Astrocyte of the cerebellum (primary cell): ENCODE measurements at regions of chr12 and their contacts with region 1.

Region 1: DNA sequence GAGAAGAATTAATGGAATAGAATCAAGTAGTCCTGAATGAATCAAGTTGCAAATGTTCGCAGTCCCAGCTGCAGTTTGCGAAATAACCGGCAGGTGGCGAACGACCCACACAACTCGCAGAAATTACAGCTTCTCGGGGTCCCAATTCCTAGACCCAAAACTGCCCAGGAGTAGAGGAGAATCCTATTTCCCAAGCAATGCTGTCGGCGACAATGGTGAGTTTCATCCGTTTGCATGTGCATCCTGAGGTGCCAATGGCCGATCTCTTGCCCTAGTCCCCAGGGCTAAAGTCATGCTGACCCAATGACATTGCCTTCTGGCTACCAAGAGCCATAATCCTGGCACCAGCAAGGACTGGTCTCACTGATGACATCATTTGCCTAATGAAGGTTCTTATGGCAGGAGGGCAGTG is 8.5 kb upstream of the ASCL1 start:
- DNase-seq: peak; percentile 23
- H3K4me3 ChIP-seq: no peak overlapping the region
- CTCF ChIP-seq: peak; percentile 92

Region 2: GRCh38 chr12:102990419-102990818 is 41.5 kb after region 1 on chr12:
- in situ Hi-C with region 1: loop called (anchors 5 kb)
- DNase-seq: no peak
- H3K4me3 ChIP-seq: no peak overlapping the region
- CTCF ChIP-seq: no peak

Region 3: GRCh38 chr12:103548622-103549601 is 600.0 kb after region 1 on chr12:
- in situ Hi-C with region 1: loop called (anchors 5 kb)
- DNase-seq: peak; percentile 55
- H3K4me3 ChIP-seq: no peak overlapping the region
- CTCF ChIP-seq: peak; percentile 86